Activated CD4-positive, alpha-beta T cell treated with anti-CD3 and anti-CD28 coated beads, Interleukin-2, amount 10 ng/mL, durations not matched to agents 7 days and 5 days (primary cell): ENCODE measurements at regions of chr10 and their contacts with region 1.

Region 1: GRCh38 chr10:72260588-72261322 is 13.0 kb upstream of the DDIT4 start:
- DNase-seq: peak; percentile 89
- H3K4me3 Mint-ChIP-seq: peak overlapping the region; percentile 73
- H3K27ac Mint-ChIP-seq: peak overlapping the region; percentile 91
- H3K4me1 Mint-ChIP-seq: peaks cover 63% of the 10 kb centered on the region
- H3K27me3 Mint-ChIP-seq: no peaks in the 10 kb centered on the region

Region 2: GRCh38 chr10:70958396-70958795 is 1302.4 kb before region 1 on chr10:
- CTCF ChIA-PET with region 1: no interaction called
- POLR2A ChIA-PET with region 1: no interaction called
- DNase-seq: no peak
- H3K4me3 Mint-ChIP-seq: no peak overlapping the region
- H3K27ac Mint-ChIP-seq: no peak overlapping the region
- H3K4me1 Mint-ChIP-seq: no peaks in the 10 kb centered on the region
- H3K27me3 Mint-ChIP-seq: peaks cover 5% of the 10 kb centered on the region

Region 3: GRCh38 chr10:72248468-72249151 is 12.1 kb before region 1 on chr10:
- CTCF ChIA-PET with region 1: interaction called, 28 read pairs
- POLR2A ChIA-PET with region 1: interaction called, 12 read pairs
- DNase-seq: peak; percentile 87
- H3K4me3 Mint-ChIP-seq: peak overlapping the region; percentile 72
- H3K27ac Mint-ChIP-seq: peak overlapping the region; percentile 93
- H3K4me1 Mint-ChIP-seq: peaks cover 83% of the 10 kb centered on the region
- H3K27me3 Mint-ChIP-seq: no peaks in the 10 kb centered on the region